CD4-positive, alpha-beta memory T cell (primary cell): ENCODE measurements at regions of chr9 and their contacts with region 1.

Region 1: DNA sequence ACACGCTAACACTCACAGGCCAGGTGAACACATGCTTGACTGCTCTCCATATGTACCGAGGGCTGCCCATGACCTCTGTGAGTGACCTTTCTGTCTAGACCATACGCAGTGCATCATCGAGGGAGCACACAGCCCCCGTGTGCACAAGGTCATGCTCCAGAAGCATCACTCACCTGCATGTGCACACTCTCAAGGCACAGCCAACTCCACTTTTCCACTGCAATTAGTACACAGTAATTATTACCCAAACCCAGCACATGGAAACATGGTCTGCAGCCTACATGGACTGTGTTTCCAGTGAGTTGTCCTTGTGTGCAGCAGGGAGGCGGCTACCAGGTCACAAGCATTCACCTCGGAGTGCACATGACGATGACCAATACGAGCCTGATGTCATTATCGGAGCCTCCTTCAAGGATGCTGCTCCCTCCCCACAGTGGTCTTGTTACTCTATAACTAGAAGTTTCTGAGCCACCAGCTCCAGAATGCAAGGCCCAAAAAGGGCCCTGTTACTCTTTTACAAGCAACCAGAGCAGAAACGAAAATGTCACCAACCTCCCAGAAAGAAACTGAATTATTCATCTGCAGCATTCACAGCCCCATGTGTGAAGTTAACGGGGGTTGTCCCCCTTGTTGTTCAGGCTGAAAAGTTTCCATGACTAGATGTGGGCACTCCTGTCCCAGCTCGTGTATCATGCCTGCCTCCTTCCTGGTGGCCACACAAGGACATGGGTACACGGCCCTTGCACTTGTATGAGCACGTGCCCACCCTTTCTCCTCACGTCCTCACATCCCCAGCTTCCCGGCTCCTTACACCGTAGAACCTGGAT is 31.2 kb downstream of the SEMA4D start:
- DNase-seq: peak in 1 of 5 donors; percentile 73
- H3K4me3 ChIP-seq: peak overlapping the region; percentile 5 to 56
- H3K4me3 Mint-ChIP-seq: peak overlapping the region; percentile 78 to 93 (median 84)
- H3K27ac ChIP-seq: peak overlapping the region; percentile 73
- H3K27ac Mint-ChIP-seq: peak overlapping the region; percentile 92 to 100 (median 96)
- H3K4me1 ChIP-seq: peaks cover 100% of the 10 kb centered on the region
- H3K4me1 Mint-ChIP-seq: peaks cover 86 to 100% (median 94%) of the 10 kb centered on the region in 4 donors
- H3K27me3 ChIP-seq: no peaks in the 10 kb centered on the region
- H3K27me3 Mint-ChIP-seq: no peaks in the 10 kb centered on the region

Region 2: DNA sequence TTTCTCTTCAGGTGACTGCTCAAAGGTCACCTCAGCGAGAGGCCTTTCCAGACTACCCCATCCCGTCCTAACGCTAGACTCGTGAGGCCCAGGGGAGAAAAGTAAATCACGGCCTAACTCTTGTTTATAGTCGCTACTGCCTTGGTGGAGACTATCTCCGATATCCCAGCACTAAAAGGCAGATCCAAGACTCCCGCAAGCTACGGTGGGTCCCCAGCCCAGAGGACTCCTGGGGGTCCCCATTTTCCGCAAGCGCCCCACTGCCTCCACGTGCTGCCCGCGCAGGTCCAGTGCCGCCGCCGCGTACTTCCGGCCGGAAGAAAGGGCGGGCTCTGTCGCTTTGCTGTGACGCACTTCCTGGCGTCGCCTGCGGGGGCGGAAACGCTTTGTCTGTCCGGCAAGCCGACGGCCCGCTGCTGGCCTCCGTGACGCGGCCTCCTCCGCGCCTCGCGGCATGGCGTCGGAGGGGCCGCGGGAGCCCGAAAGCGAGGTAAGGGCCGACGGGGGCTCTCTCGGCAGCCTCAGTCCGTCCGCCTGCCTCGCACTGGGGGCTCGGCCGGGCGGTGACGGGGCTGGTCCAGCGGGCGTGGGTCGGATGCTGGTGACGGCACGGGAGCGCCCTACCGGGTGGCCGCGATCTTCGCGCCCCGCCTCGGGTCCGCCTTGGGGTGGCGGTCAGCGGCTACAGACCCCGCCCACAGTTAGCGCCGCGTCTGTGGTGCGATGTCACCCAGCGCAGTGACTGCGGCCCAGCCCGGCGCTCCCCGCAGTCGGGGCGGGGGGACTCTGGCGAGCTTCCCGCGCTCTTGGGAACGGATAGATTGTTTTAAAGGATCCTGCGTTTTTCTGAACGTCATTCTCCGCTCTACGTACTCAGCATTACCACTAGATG is 148.3 kb before region 1 on chr9 and contains the start of gene SECISBP2:
- CTCF ChIA-PET with region 1: no interaction called
- POLR2A ChIA-PET with region 1: interaction called, 3 read pairs
- intact Hi-C with region 1: loop called (anchors 10 kb)
- DNase-seq: peak; percentile 94 to 97 (median 94)
- H3K4me3 ChIP-seq: peak within 1 kb of the TSS; percentile 67 to 76
- H3K4me3 Mint-ChIP-seq: peak within 1 kb of the TSS; percentile 83 to 94 (median 92)
- H3K27ac ChIP-seq: peak within 1 kb of the TSS; percentile 100
- H3K27ac Mint-ChIP-seq: peak within 1 kb of the TSS; percentile 91 to 99 (median 98)
- H3K4me1 ChIP-seq: peaks cover 55% of the 10 kb centered on the region
- H3K4me1 Mint-ChIP-seq: peaks cover 38 to 69% (median 54%) of the 10 kb centered on the region in 4 donors
- H3K27me3 ChIP-seq: no peaks in the 10 kb centered on the region
- H3K27me3 Mint-ChIP-seq: peaks cover 0 to under 1% of the 10 kb centered on the region in 2 donors
- total RNA-seq, gene SECISBP2: 96.5 to 112 TPM

Region 3: DNA sequence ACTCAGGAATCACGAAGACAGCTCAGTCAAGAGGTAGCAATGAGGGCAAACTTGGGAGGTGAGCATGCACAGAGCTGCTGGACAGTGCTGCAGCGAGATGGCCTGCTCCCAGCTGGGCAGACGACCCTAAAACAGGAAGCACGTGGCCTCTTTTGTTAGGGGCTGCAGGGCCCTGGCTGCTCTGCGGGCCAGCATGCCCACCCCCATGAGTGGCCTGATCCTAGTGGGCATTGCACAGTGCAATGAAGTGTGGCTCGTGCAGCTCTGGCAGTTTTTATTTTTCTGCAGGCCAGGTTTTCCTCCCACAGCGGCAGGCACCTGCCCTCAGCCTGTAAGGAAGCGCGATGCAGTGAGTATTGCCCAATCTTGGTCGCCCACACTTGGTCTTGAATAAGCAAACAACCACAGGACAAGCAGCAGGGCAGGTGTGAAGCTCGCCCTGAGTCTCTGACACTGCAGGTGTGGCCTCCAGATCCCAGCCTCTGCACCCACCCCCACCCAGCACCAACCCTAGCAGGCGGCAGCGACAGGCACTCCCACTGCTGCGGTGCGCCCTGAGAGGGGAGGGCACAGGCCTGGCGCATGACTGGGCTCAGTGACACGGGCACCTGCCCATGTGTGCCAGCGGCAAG is 29.5 kb before region 1 on chr9:
- CTCF ChIA-PET with region 1: interaction called, 4 read pairs
- POLR2A ChIA-PET with region 1: interaction called, 52 read pairs
- intact Hi-C with region 1: loop called (anchors 2 kb)
- DNase-seq: peak; percentile 76 to 91 (median 78)
- H3K4me3 ChIP-seq: peak overlapping the region in 1 of 2 donors; percentile 17
- H3K4me3 Mint-ChIP-seq: peak overlapping the region; percentile 57 to 85 (median 74)
- H3K27ac ChIP-seq: peak overlapping the region; percentile 52
- H3K27ac Mint-ChIP-seq: peak overlapping the region; percentile 90 to 98 (median 95)
- H3K4me1 ChIP-seq: peaks cover 99% of the 10 kb centered on the region
- H3K4me1 Mint-ChIP-seq: peaks cover 61 to 96% (median 83%) of the 10 kb centered on the region in 4 donors
- H3K27me3 ChIP-seq: no peaks in the 10 kb centered on the region
- H3K27me3 Mint-ChIP-seq: no peaks in the 10 kb centered on the region

Region 4: GRCh38 chr9:89455356-89455824 is 11.3 kb before region 1 on chr9:
- CTCF ChIA-PET with region 1: interaction called, 4 read pairs
- POLR2A ChIA-PET with region 1: interaction called, 609 read pairs
- intact Hi-C with region 1: loop called (anchors 1 kb)
- DNase-seq: peak; percentile 50 to 72 (median 63)
- H3K4me3 ChIP-seq: peak overlapping the region in 1 of 2 donors; percentile 22
- H3K4me3 Mint-ChIP-seq: peak overlapping the region; percentile 72 to 90 (median 82)
- H3K27ac ChIP-seq: peak overlapping the region; percentile 68
- H3K27ac Mint-ChIP-seq: peak overlapping the region; percentile 92 to 98 (median 97)
- H3K4me1 ChIP-seq: peaks cover 97% of the 10 kb centered on the region
- H3K4me1 Mint-ChIP-seq: peaks cover 71 to 98% (median 87%) of the 10 kb centered on the region in 4 donors
- H3K27me3 ChIP-seq: no peaks in the 10 kb centered on the region
- H3K27me3 Mint-ChIP-seq: no peaks in the 10 kb centered on the region

Region 5: DNA sequence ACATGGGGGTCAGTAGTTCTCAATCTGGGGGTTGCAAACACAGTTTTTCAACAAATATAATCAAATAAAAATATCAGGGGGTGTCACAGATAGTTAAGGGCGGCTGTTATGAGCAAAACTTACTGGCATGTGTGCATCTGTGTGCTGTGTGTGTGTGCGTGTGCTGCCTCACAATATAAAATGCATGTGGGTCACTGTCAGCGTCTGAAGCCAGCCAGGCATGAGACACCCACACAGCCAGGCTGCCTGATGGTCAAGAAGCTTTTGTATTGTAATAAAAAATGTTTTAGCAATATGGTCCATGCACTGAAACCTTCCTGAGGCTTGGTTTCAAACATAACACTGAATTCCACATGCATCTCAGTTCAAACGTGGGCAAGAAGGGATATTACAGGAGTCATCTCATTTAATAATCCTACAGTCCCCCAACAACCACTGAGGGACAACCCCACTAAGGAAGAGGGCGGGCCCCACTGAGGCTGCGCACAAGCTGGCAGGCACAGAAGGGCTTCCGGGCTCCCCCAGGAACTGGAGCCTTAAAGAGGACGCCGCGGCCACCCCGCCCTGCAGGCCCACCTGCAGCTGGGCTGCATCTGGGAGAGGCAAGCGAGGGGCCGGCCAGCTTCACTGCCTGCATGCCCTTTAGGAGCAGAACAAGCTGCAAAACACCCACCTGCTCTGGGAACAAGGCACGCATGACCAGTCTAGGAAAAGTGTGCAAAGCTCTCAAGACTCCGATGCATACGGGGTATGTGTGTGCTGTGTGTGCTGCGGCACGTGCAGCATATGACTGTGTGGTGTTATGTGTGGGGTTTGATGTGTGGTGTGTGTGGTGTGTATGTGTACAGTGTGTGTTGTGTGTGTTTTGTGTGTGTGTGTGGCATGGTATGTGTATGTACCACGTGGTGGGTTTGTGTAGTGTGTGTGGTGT is 17.2 kb after region 1 on chr9:
- CTCF ChIA-PET with region 1: interaction called, 4 read pairs
- POLR2A ChIA-PET with region 1: interaction called, 609 read pairs
- intact Hi-C with region 1: no loop called
- DNase-seq: peak; percentile 66 to 83 (median 72)
- H3K4me3 ChIP-seq: peak overlapping the region; percentile 50 to 79
- H3K4me3 Mint-ChIP-seq: peak overlapping the region; percentile 92 to 100 (median 98)
- H3K27ac ChIP-seq: peak overlapping the region; percentile 58
- H3K27ac Mint-ChIP-seq: peak overlapping the region; percentile 74 to 99 (median 96)
- H3K4me1 ChIP-seq: peaks cover 89% of the 10 kb centered on the region
- H3K4me1 Mint-ChIP-seq: peaks cover 78 to 95% (median 88%) of the 10 kb centered on the region in 4 donors
- H3K27me3 ChIP-seq: no peaks in the 10 kb centered on the region
- H3K27me3 Mint-ChIP-seq: no peaks in the 10 kb centered on the region

Region 6: GRCh38 chr9:89497978-89498851 is 31.6 kb after region 1 on chr9 and contains the start of gene SEMA4D:
- CTCF ChIA-PET with region 1: no interaction called
- POLR2A ChIA-PET with region 1: interaction called, 13 read pairs
- intact Hi-C with region 1: loop called (anchors 1 kb)
- DNase-seq: peak in 3 of 5 donors; percentile 28 to 68 (median 37)
- H3K4me3 ChIP-seq: peak within 1 kb of the TSS; percentile 89 to 98
- H3K4me3 Mint-ChIP-seq: peak within 1 kb of the TSS; percentile 94 to 100 (median 98)
- H3K27ac ChIP-seq: peak within 1 kb of the TSS; percentile 72
- H3K27ac Mint-ChIP-seq: peak within 1 kb of the TSS; percentile 94 to 98 (median 96)
- H3K4me1 ChIP-seq: peaks cover 86% of the 10 kb centered on the region
- H3K4me1 Mint-ChIP-seq: peaks cover 71 to 93% (median 81%) of the 10 kb centered on the region in 4 donors
- H3K27me3 ChIP-seq: no peaks in the 10 kb centered on the region
- H3K27me3 Mint-ChIP-seq: no peaks in the 10 kb centered on the region
- total RNA-seq, gene SEMA4D: 393 to 410 TPM

Region 7: GRCh38 chr9:89623925-89624420 is 157.3 kb after region 1 on chr9:
- CTCF ChIA-PET with region 1: no interaction called
- POLR2A ChIA-PET with region 1: no interaction called
- intact Hi-C with region 1: no loop called
- DNase-seq: no peak
- H3K4me3 ChIP-seq: no peak overlapping the region
- H3K4me3 Mint-ChIP-seq: no peak overlapping the region
- H3K27ac ChIP-seq: no peak overlapping the region
- H3K27ac Mint-ChIP-seq: no peak overlapping the region
- H3K4me1 ChIP-seq: no peaks in the 10 kb centered on the region
- H3K4me1 Mint-ChIP-seq: no peaks in the 10 kb centered on the region
- H3K27me3 ChIP-seq: no peaks in the 10 kb centered on the region
- H3K27me3 Mint-ChIP-seq: peaks cover 0 to 2% of the 10 kb centered on the region in 2 donors